ENCODE measurements at regions of chr2 and their contacts with region 1.

Region 1: DNA sequence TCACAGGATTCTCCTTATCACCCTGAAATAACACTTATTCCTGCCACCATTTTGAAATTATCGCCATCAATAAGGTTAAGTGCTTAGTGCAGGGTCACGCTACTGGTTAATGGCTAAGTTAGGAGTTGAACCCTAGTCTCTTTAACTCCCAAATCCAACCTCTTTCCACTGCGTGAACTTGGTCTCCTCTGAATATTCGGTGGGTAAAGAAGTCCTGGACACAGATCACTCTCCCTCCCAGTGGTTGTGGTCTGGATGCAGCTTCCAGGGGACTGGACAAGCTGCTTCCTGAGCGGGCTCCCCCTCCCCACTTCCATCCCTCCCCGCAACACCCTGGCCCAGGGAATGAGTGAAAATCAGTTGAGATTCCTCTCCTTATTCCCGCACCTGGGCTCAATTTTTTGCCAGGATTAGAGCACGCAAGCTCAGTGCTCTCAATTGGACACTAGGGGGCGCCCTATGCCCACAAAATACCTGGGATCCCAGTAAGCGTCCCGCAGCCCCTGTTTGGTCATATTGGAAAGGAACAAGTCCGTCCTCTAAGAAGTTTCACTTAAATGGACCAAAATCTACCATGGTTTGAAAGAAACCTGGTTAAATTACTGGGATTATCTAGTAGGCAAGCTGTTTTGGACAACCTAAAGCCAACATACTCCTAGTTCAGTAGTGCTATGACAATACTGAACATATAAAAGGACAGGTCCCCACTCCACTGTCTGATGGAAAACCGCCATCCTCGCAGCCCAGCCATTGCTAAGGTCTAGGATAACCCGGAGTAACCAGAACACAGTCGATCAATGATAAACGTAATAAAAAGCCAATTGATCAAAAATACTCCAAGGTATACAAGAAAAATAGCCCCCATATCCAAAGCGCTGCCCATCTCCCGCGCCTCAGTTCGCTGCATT is 40.4 kb downstream of the DHRS9 start:
- DNase-seq: peak; percentile 80
- H3K4me3 Mint-ChIP-seq: no peak overlapping the region
- H3K27ac Mint-ChIP-seq: no peak overlapping the region
- H3K4me1 Mint-ChIP-seq: peaks cover 43% of the 10 kb centered on the region
- H3K27me3 Mint-ChIP-seq: no peaks in the 10 kb centered on the region

Region 2: GRCh38 chr2:168816369-168816768 is 293.4 kb before region 1 on chr2:
- CTCF ChIA-PET with region 1: no interaction called
- POLR2A ChIA-PET with region 1: no interaction called
- DNase-seq: no peak
- H3K4me3 Mint-ChIP-seq: no peak overlapping the region
- H3K27ac Mint-ChIP-seq: no peak overlapping the region
- H3K4me1 Mint-ChIP-seq: no peaks in the 10 kb centered on the region
- H3K27me3 Mint-ChIP-seq: peaks cover 2% of the 10 kb centered on the region

Region 3: DNA sequence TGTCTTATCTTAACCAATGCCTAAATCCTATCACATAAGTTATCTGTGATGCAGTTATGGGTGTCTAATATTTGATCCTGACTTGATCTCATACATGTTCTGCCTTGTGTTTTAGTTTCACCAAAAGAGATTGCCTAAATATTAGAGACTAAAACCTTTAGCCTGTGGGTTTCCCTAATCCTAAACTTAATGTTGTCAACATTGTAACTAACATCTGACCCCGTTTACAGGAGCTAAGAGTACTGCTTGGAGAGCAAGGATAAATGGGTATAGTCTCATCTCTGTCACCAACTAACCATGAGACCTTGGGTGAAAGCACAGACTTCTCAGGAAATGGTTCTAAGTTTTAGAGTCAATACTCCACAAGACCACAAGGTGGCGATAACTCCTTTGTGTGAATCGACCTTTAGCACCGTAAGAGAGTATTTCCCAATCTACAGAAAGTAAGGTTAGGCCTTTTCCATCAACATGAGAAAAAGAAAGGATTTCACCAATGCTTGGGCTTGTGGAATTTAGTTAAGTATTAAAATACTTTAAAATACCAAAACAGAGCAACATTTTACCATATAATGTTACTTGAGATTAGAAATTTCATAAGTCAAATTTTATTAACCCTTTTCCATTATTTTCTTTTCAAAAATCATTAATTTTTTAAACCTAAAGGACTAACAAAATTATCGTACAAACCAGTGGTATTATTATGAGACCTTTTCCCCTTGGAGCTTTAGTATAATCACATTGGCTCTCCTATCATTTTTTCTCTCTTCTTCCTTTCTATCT is 148.1 kb before region 1 on chr2:
- CTCF ChIA-PET with region 1: interaction called, 49 read pairs
- POLR2A ChIA-PET with region 1: interaction called, 3 read pairs
- DNase-seq: no peak
- H3K4me3 Mint-ChIP-seq: no peak overlapping the region
- H3K27ac Mint-ChIP-seq: no peak overlapping the region
- H3K4me1 Mint-ChIP-seq: peaks cover 18% of the 10 kb centered on the region
- H3K27me3 Mint-ChIP-seq: peaks cover 5% of the 10 kb centered on the region

Region 4: GRCh38 chr2:169095621-169096105 is 14.1 kb before region 1 on chr2:
- CTCF ChIA-PET with region 1: interaction called, 35 read pairs
- POLR2A ChIA-PET with region 1: interaction called, 3 read pairs
- DNase-seq: no peak
- H3K4me3 Mint-ChIP-seq: no peak overlapping the region
- H3K27ac Mint-ChIP-seq: no peak overlapping the region
- H3K4me1 Mint-ChIP-seq: peaks cover 19% of the 10 kb centered on the region
- H3K27me3 Mint-ChIP-seq: peaks cover 2% of the 10 kb centered on the region

Region 5: DNA sequence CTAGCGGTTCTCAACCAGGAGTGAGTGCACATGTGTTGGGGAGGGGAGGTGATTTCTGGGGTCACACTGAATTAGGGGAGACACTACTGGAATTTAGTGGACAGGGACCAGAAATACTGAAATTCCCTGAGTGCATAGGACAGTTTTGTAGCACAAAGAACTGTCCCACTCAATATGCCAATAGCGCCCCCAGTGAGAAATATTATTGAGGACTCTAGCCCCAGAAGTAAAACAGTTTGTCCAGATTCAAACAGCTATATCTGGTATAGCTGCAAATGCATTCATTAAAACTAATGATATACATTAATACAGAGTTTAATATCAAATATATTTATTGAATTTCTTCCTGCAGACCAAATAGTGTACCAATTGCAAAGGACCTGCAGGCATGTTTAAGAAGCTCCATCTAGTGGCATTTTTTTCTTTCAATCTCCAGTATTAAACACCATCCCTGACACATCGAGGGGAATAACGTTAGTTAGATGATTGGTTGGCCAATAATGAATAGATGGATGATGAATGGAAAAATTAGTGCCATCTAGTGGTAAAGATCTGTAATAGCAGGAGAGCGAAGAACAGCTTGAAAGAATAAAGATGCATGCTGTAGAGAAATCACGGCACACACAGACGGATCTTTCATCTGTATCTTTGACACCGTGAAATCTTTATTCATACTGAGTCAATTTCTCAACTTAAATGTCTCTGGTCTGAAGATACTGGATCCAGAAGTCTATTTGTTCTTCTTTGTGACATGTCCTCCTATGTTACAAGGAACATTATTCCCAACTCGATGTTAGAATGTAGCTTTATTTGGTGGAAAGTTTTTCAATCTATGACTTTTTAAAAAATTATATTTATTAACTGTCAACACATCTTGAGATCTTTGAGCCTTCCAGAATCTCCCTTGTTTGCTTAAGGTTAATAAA is 22.1 kb after region 1 on chr2:
- CTCF ChIA-PET with region 1: interaction called, 129 read pairs
- POLR2A ChIA-PET with region 1: interaction called, 3 read pairs
- DNase-seq: no peak
- H3K4me3 Mint-ChIP-seq: no peak overlapping the region
- H3K27ac Mint-ChIP-seq: no peak overlapping the region
- H3K4me1 Mint-ChIP-seq: no peaks in the 10 kb centered on the region
- H3K27me3 Mint-ChIP-seq: no peaks in the 10 kb centered on the region

Region 6: DNA sequence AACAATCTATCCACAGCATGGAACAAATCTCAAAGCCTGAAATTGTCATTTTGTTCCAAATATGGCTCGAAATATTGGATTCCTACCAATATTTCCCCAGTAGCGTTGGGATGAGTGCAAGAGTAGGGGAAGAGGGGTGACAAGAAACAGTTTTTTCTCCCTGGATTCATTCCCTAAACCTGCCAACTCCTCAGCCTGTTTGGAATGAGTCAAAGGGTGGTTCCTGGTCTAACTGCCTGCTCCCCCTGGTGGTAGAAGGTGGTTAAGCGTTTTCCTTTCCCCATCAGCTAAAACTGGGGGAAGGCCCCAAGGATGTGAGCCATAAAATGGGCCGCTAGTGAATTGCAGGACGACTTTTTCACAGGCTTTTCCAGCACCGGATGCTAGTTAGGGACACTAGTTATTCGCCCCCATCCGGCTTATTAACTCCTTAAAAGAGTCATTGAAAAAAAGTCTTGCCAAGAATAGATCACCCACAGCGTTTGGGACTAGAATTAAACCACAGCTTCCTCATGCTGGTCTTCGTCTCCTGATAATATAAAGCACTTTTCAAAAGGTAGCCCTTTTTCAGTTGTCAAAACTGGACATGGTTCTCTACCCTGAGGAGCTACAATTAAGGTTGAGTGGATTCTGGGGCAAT is 32.1 kb after region 1 on chr2:
- CTCF ChIA-PET with region 1: interaction called, 186 read pairs
- POLR2A ChIA-PET with region 1: interaction called, 3 read pairs
- DNase-seq: peak; percentile 61
- H3K4me3 Mint-ChIP-seq: no peak overlapping the region
- H3K27ac Mint-ChIP-seq: no peak overlapping the region
- H3K4me1 Mint-ChIP-seq: no peaks in the 10 kb centered on the region
- H3K27me3 Mint-ChIP-seq: no peaks in the 10 kb centered on the region

Region 7: DNA sequence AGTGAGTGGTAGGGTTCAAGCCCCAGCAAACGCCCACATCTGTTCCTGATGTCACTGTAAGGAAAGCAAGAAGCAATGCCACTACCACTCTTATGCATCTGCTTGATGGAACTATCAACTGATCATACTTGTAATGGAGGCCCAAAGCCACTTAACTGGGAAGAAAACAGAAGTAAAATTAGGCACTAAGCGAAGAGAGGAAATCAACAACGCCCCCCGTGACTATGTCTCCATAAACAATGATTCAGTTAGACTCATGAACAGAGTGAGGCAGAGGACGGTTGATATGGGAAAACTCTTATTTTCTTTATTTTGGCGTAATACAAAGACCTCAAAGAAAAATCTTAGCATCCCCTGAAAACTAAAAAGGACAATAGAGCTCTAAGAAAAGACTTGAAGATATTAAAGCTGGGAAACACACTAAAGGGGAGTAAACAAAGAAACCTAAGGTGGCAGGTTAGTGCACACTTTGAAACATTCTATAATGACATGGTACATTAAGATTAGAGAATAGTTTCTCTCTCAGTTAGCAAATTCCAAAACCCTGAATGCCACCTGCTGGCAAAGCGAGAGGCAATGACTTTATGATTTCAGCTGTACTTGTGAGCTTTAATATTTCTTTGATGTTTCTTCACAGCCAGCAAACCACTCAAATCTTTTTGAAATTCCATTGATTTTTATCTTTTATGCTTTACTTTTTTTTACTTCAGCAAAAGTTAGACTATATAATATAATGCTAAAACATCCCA is 166.1 kb after region 1 on chr2:
- CTCF ChIA-PET with region 1: interaction called, 16 read pairs
- POLR2A ChIA-PET with region 1: no interaction called
- DNase-seq: no peak
- H3K4me3 Mint-ChIP-seq: no peak overlapping the region
- H3K27ac Mint-ChIP-seq: no peak overlapping the region
- H3K4me1 Mint-ChIP-seq: no peaks in the 10 kb centered on the region
- H3K27me3 Mint-ChIP-seq: peaks cover 16% of the 10 kb centered on the region

Measured in activated CD4-positive, alpha-beta memory T cell treated with anti-CD3 and anti-CD28 coated beads, Interleukin-2, amount 10 ng/mL, durations not matched to agents 7 days and 5 days (primary cell).